Adrenal gland (tissue), 19 donors: ENCODE measurements at regions of chr4 and their contacts with region 1.

Region 1: DNA sequence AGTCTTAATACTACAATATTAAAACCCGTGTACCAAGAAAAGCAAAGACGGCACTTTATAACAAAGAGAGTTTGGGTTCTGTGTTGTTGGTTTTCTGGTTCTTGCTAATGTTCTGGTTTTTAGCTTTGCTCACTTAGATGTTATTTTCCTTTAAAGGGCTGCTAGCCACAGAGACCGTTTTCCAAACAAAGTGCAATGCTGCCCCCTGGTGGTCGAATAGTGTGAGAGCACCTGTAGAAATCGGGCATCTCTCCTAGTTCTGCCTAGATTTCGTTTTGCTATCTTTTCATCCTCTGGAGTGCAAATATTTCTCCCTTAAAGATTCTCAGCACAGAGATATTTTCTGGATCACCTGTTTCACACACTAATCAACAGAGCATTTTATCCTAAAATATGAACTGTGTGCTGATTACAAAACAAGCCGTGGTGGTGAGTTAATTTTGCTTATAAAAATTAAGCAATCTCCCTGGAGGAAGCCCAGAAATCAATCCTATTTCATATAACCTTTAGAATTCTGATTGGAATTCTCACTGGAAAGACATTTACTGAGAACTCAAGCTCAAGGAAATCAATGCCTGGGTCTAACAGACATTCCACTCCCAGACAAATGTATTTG is 334.5 kb upstream of the NOCT start:
- DNase-seq: peak; percentile 67 to 93 (median 82)
- H3K4me3 ChIP-seq: no peak overlapping the region
- H3K27ac ChIP-seq: no peak overlapping the region
- H3K4me1 ChIP-seq: no peaks in the 10 kb centered on the region
- H3K27me3 ChIP-seq: peaks cover 12% of the 10 kb centered on the region
- CTCF ChIP-seq: peak; percentile 75 to 98 (median 90)
- POLR2A ChIP-seq: no peak

Region 2: GRCh38 chr4:138035781-138036258 is 645.3 kb before region 1 on chr4:
- intact Hi-C with region 1: loop called in 1 of 2 experiments (anchors 5 kb)
- DNase-seq: peak in 2 of 7 donors; percentile 9 to 19
- H3K4me3 ChIP-seq: no peak overlapping the region
- H3K27ac ChIP-seq: no peak overlapping the region
- H3K4me1 ChIP-seq: no peaks in the 10 kb centered on the region
- H3K27me3 ChIP-seq: no peaks in the 10 kb centered on the region
- CTCF ChIP-seq: peak; percentile 30 to 69 (median 58)
- POLR2A ChIP-seq: no peak

Region 3: GRCh38 chr4:138864961-138865720 is 184.0 kb after region 1 on chr4:
- intact Hi-C with region 1: loop called in 1 of 2 experiments (anchors 10 kb)
- DNase-seq: no peak
- H3K4me3 ChIP-seq: no peak overlapping the region
- H3K27ac ChIP-seq: no peak overlapping the region
- H3K4me1 ChIP-seq: no peaks in the 10 kb centered on the region
- H3K27me3 ChIP-seq: no peaks in the 10 kb centered on the region
- CTCF ChIP-seq: no peak
- POLR2A ChIP-seq: no peak